ENCODE measurements at regions of chr9 and their contacts with region 1.

Region 1: DNA sequence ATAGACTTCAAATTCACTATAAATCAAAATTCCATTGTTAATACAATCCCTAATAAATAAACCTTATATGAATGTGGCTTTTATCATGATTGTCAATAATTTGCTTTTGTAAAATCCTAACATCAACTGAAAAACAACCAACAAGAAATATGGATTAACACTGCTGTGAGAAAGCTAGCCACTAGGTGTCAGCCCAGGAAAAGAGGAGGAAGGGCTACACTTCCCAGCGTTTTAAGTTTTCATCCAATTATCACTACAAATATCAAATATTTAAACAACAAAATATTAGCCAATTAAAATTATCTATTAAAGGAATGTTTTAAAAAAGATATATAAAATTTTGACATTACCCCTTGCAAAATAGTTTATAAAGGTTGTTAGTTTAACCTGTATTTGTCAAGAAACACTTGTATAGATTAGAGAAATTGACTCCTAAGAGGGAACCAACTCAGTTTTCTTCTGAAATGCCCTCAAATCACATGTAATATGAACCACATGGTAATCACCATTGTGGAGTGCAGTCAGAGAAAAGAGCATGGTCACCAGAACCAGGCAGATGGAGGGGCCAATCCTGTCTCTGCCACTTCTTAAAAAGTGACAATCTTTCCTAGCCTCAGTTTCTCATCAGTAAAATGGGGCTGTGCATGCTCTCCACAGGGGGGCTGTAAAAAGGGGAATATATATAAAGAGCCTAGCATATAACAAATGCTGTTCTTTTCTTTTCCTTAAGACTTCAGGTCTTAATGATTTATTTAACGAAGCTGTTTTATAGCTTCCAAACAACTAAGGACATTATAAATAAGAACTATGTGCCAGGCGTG is 188.2 kb downstream of the CRB2 start:
- DNase-seq: no peak
- H3K4me3 ChIP-seq: no peak overlapping the region
- H3K27ac ChIP-seq: no peak overlapping the region
- H3K4me1 ChIP-seq: peaks cover 0 to 24% (median 7%) of the 10 kb centered on the region in 6 donors
- H3K27me3 ChIP-seq: no peaks in the 10 kb centered on the region
- CTCF ChIP-seq: peak; percentile 48 to 78 (median 73)
- POLR2A ChIP-seq: no peak

Region 2: GRCh38 chr9:123597876-123598556 is 53.8 kb after region 1 on chr9:
- intact Hi-C with region 1: no loop called
- DNase-seq: no peak
- H3K4me3 ChIP-seq: no peak overlapping the region
- H3K27ac ChIP-seq: no peak overlapping the region
- H3K4me1 ChIP-seq: peaks cover 0 to 8% (median 0%) of the 10 kb centered on the region in 6 donors
- H3K27me3 ChIP-seq: no peaks in the 10 kb centered on the region
- CTCF ChIP-seq: no peak
- POLR2A ChIP-seq: no peak

Region 3: DNA sequence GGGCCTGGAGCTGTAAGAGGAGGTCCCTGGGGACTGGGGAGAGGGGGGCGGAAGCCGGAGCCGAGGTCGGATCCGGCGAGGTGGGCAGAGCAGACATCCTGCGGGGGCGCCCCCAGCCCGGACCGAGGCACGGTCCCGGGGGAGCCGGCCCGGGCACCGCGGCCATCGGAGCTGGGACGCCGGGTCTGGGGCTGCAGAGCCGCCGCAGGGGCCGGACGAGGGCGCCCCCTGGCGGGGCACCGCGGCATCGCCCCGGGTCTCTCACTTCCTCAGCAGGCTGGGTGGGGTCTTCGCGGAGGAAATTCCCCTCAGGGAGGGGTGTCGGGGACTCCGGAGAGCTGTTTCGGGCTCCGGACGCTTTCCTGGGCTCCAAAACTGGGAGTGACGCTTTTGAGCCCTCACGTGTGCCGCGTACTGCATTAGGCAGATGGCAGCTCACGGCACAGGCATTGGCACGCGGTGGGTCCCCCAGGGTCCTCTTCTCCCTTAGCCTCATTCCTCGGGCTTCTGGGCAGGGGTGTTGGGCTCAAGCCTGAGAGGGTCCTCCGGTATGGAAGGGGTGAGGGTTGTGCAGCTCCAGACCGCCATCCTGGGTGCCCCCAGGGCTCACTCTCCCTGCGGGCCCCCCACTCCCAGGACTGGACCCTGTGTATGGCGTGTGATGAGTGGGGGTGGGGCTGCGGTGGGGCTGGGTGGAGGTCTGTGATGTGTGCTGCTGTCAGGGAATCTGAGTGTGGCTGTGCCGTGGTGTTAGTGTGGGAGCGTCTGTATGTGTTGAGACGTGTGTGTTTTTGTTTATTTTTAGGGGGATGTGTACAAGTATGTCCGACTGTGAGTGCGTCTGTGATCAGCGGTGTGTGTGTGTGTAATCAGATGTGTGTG is 497.0 kb after region 1 on chr9:
- intact Hi-C with region 1: loop called (anchors 5 kb)
- DNase-seq: peak; percentile 88
- H3K4me3 ChIP-seq: peak overlapping the region in 7 of 8 donors; percentile 24 to 66 (median 30)
- H3K27ac ChIP-seq: no peak overlapping the region
- H3K4me1 ChIP-seq: peaks cover 8 to 34% (median 25%) of the 10 kb centered on the region in 6 donors
- H3K27me3 ChIP-seq: peaks cover 0 to 100% (median 35%) of the 10 kb centered on the region in 7 donors
- CTCF ChIP-seq: peak; percentile 54 to 99 (median 90)
- POLR2A ChIP-seq: no peak

Region 4: GRCh38 chr9:124559862-124560261 is 1015.6 kb after region 1 on chr9:
- intact Hi-C with region 1: no loop called
- DNase-seq: no peak
- H3K4me3 ChIP-seq: no peak overlapping the region
- H3K27ac ChIP-seq: no peak overlapping the region
- H3K4me1 ChIP-seq: no peaks in the 10 kb centered on the region
- H3K27me3 ChIP-seq: no peaks in the 10 kb centered on the region
- CTCF ChIP-seq: no peak
- POLR2A ChIP-seq: no peak